Motor neuron (in vitro differentiated cells): ENCODE measurements at regions of chr2 and their contacts with region 1.

Region 1: GRCh38 chr2:88187038-88187676 is 17.0 kb downstream of the THNSL2 start:
- ATAC-seq: peak; percentile 26 to 94 (median 84)
- H3K4me3 ChIP-seq: no peak overlapping the region
- H3K27ac ChIP-seq: no peak overlapping the region
- H3K4me1 ChIP-seq: peaks cover 0 to 2% of the 10 kb centered on the region in 2 donors

Region 2: GRCh38 chr2:88281302-88282217 is 94.4 kb after region 1 on chr2:
- in situ Hi-C with region 1: loop called in 1 of 9 experiments (anchors 25 kb)
- ATAC-seq: no peak
- H3K4me3 ChIP-seq: no peak overlapping the region
- H3K27ac ChIP-seq: no peak overlapping the region
- H3K4me1 ChIP-seq: no peaks in the 10 kb centered on the region

Region 3: DNA sequence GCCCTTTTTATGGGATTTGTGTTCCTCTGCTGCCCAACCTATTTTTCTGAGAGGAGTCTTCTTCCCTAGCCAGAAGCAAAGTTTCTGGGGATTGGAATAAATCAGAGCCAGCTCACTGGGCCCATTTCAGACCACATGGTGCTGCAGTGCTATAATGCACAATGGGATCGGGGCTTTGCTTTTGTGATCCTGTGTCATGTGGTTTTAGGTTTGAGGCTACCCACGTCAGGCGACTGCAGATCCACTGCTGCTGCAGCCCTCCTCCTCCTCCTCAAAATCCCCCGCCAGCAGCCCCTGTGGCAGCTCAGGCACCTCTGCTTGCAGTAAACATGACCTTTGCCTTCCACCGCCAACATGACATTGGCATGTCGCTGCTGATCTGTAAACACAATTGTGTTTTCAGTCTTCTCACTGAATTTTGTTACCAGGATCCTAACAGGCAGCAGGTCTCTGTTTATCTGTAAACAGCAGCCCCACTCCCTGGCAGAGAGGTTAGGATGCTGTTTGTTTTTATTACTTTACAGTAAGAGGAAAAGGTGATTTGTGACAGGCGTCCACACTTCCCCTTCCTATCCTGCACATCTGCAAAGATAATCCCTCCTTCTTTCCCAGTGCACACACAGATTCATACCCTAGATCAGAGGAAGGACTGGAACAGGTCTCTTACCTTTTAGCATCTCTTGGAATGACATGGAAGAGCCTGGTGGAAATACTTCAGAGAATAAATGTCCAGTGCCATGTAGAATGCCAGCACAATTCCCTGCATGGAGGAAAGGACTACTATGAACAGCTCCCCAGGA is 134.5 kb after region 1 on chr2:
- in situ Hi-C with region 1: no loop called
- ATAC-seq: peak in 4 of 8 experiments; percentile 25 to 57 (median 48)
- H3K4me3 ChIP-seq: no peak overlapping the region
- H3K27ac ChIP-seq: no peak overlapping the region
- H3K4me1 ChIP-seq: no peaks in the 10 kb centered on the region

Region 4: GRCh38 chr2:88554189-88554588 is 367.0 kb after region 1 on chr2:
- in situ Hi-C with region 1: loop called in 1 of 9 experiments (anchors 10 kb)
- ATAC-seq: peak in 6 of 8 experiments; percentile 8 to 45 (median 14)
- H3K4me3 ChIP-seq: no peak overlapping the region
- H3K27ac ChIP-seq: no peak overlapping the region
- H3K4me1 ChIP-seq: no peaks in the 10 kb centered on the region